ENCODE measurements at regions of chr1 and their contacts with region 1.

Region 1: GRCh38 chr1:231866392-231867331 is 240.1 kb downstream of the DISC1 start:
- DNase-seq: no peak
- ATAC-seq: peak in 3 of 4 donors; percentile 43 to 68 (median 62)
- H3K4me3 ChIP-seq: no peak overlapping the region
- H3K27ac ChIP-seq: no peak overlapping the region
- H3K4me1 ChIP-seq: peaks cover 9% of the 10 kb centered on the region
- H3K27me3 ChIP-seq: no peaks in the 10 kb centered on the region
- CTCF ChIP-seq: peak; percentile 88

Region 2: GRCh38 chr1:231757101-231757404 is 109.6 kb before region 1 on chr1:
- intact Hi-C with region 1: no loop called
- DNase-seq: no peak
- ATAC-seq: peak in 2 of 4 donors; percentile 47 to 53
- H3K4me3 ChIP-seq: no peak overlapping the region
- H3K27ac ChIP-seq: no peak overlapping the region
- H3K4me1 ChIP-seq: peaks cover 2% of the 10 kb centered on the region
- H3K27me3 ChIP-seq: no peaks in the 10 kb centered on the region
- CTCF ChIP-seq: no peak

Region 3: GRCh38 chr1:231913493-231913892 is 46.8 kb after region 1 on chr1:
- intact Hi-C with region 1: no loop called
- DNase-seq: no peak
- ATAC-seq: no peak
- H3K4me3 ChIP-seq: no peak overlapping the region
- H3K27ac ChIP-seq: no peak overlapping the region
- H3K4me1 ChIP-seq: no peaks in the 10 kb centered on the region
- H3K27me3 ChIP-seq: no peaks in the 10 kb centered on the region
- CTCF ChIP-seq: no peak

Region 4: DNA sequence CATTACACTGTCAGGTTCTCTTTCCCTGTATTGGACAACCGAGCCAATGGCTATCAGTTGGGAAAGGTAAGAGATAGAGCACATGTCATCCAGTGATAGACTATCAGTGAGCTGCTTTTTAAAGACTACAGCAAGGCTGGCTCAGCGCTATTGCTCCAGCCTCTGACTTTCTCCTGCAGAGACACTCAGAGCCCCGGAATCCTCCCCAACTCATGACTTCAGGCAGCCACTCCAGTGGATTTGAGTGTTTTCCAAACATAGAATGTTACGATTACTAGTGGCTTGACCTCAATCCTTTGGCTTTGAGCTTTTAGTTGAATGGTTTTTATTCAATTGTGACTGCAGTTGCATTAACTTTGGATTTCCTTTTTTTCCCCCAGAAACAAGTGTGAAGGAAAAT is 91.8 kb after region 1 on chr1:
- intact Hi-C with region 1: no loop called
- DNase-seq: no peak
- ATAC-seq: no peak
- H3K4me3 ChIP-seq: no peak overlapping the region
- H3K27ac ChIP-seq: no peak overlapping the region
- H3K4me1 ChIP-seq: no peaks in the 10 kb centered on the region
- H3K27me3 ChIP-seq: no peaks in the 10 kb centered on the region
- CTCF ChIP-seq: no peak

Region 5: DNA sequence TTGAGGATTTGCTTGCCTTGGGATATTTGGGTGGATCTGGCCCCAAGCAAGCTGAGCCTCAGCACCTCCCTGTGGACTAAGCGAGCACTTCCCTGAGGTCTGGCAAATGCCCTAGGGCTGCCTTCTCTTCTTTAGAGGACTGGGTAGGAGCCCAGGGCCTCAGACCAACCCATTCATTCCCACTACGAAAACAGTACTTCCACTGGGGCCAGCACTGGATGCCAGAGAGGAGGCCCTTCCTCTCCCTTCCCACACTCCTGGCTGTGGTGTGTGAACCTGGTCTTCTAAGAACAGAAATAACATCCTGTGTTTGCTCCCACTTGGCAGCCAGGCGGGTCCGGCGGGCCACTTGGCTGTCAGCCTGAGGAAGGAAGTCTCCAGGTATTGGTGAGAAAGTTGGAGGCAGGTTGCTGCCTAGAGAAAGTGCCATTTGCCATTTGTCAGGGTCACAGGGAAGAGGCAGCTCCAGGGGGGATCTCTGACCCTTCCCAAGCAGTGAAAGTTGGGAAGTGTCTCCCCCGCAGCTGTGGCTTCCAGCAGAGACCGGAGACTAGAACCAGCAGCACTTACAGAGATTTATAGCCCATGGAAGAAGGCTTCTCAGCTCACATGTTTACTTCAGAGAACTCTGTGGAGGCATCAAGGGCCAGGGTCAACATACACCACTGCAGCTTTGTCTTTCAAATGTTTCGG is 439.8 kb after region 1 on chr1:
- intact Hi-C with region 1: loop called in 1 of 2 experiments (anchors 5 kb)
- DNase-seq: peak; percentile 47 to 60
- ATAC-seq: peak; percentile 64 to 84 (median 74)
- H3K4me3 ChIP-seq: no peak overlapping the region
- H3K27ac ChIP-seq: peak overlapping the region; percentile 36
- H3K4me1 ChIP-seq: peaks cover 13% of the 10 kb centered on the region
- H3K27me3 ChIP-seq: peaks cover 0 to 2% (median 0%) of the 10 kb centered on the region in 3 donors
- CTCF ChIP-seq: peak; percentile 44

Region 6: DNA sequence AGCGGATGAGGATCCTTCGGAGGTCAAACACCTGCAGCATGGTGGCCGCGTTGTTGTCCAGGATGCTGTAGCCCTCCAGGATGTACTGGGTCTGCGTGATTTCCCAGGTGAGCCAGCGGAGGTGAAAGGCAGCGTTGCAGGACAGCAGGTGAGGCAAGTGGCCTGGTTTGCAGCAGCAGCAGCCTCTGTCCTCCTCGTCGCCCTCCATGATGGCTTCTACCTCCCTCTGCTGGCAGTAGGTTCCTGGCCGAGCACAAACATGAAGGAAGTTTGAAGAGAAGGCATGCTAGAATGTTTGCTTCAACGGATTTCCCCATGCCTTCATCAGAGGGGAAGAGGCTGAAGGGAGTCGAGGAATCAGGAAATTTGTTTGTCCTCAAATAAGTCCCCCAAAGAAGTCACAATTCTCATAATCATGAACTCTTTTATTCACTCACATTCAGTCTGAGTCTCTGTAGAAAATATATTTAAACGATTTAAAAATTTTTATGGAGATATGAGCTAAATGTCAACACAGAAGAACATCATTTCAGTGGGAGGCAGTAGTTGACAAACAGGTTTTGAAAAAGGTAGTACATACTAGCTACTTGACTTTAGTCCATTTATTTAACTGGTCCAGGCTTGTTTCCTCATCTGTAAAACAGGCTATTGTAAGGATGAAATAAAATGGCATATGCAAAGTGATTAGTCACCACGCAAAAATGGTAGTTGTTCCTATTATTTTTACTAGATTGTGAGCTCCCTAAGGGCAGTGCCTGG is 1158.7 kb after region 1 on chr1:
- intact Hi-C with region 1: loop called in 1 of 2 experiments (anchors 5 kb)
- DNase-seq: peak; percentile 16 to 59
- ATAC-seq: peak; percentile 65 to 81 (median 72)
- H3K4me3 ChIP-seq: no peak overlapping the region
- H3K27ac ChIP-seq: no peak overlapping the region
- H3K4me1 ChIP-seq: no peaks in the 10 kb centered on the region
- H3K27me3 ChIP-seq: no peaks in the 10 kb centered on the region
- CTCF ChIP-seq: peak; percentile 62

Region 7: DNA sequence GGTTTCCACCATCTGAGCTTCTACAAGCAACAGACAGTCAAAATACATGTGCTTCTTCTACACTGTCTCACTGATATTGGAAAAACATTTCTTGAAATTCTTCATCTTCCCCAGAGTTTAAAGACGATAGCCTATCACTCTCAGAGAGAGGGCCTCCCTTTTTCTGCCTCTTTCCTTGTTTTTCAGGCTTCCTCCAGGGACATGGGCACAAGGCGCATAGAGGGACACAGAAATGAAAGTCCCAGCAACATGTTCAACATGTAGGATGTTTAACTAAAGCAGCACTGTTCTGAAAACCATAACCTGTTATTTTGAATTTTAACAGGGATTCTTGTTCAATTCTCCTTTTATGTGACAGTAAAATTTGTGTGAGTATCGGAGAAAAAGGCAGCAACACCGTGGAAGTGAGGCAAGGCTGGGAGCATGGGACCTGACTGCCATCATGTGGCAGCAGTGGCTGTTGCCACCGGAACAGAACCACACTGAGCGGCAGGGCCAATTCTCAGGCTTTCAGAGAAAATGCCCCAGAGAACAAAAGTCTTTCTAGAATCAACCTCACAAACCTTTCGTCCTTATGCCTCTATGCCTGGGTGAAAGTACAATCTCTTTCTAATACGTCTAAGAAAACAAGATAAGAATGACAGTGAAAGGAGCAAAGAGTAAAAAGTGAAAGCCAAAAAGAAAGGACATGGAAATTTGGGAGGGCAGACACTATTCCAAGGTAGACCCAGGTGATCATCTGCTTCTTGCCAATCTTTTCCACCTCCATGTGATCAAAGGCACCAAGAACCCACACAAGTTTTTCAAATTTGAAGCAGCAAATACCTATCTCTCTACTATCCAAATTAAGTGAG is 1374.4 kb after region 1 on chr1:
- intact Hi-C with region 1: loop called (anchors 2 to 5 kb)
- DNase-seq: peak; percentile 60 to 78
- ATAC-seq: peak; percentile 80 to 91 (median 82)
- H3K4me3 ChIP-seq: peak overlapping the region; percentile 40
- H3K27ac ChIP-seq: no peak overlapping the region
- H3K4me1 ChIP-seq: no peaks in the 10 kb centered on the region
- H3K27me3 ChIP-seq: no peaks in the 10 kb centered on the region
- CTCF ChIP-seq: peak; percentile 85